ENCODE measurements at regions of chr14 and their contacts with region 1.

Region 1: GRCh38 chr14:88667555-88668273 is 104.9 kb downstream of the ZC3H14 start:
- DNase-seq: peak; percentile 25
- ATAC-seq: peak; percentile 89
- H3K4me3 ChIP-seq: peak overlapping the region; percentile 16; the same call in 1 of the 2 replicates
- H3K27ac ChIP-seq: peak overlapping the region; percentile 55
- H3K4me1 ChIP-seq: peaks cover 23% of the 10 kb centered on the region
- H3K27me3 ChIP-seq: no peaks in the 10 kb centered on the region
- CTCF ChIP-seq: peak; percentile 88 to 90 (median 88)
- EP300 ChIP-seq: no peak
- POLR2A ChIP-seq: no peak
- RAD21 ChIP-seq: peak; percentile 94

Region 2: GRCh38 chr14:88628462-88628861 is 39.3 kb before region 1 on chr14:
- CTCF ChIA-PET with region 1: interaction called, 10 read pairs
- POLR2A ChIA-PET with region 1: interaction called, 4 read pairs
- RAD21 ChIA-PET with region 1: interaction called, 4 read pairs
- SMC1A ChIA-PET with region 1: interaction called, 3 read pairs
- in situ Hi-C with region 1: no loop called
- intact Hi-C with region 1: no loop called
- DNase-seq: no peak
- ATAC-seq: no peak
- H3K4me3 ChIP-seq: no peak overlapping the region
- H3K27ac ChIP-seq: no peak overlapping the region
- H3K4me1 ChIP-seq: no peaks in the 10 kb centered on the region
- H3K27me3 ChIP-seq: no peaks in the 10 kb centered on the region
- CTCF ChIP-seq: no peak
- EP300 ChIP-seq: no peak
- POLR2A ChIP-seq: no peak
- RAD21 ChIP-seq: no peak

Region 3: DNA sequence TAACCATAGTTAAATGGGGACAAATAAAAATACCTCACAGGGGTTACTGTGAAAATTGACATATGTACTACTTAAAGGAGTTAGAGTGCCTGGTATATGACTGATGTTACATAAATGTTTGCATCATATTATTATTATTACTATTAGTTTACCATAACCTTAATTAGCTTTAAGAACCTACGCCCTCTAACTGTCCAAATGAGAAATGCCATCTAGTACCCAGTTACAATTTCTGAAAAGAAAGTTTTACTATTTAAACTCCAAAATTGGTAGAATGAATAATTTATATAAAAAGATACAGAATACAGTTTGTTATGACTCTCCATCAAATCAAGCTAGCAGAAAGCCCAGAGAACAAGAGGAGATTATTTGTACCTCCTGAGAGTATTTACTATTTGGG is 82.7 kb after region 1 on chr14:
- CTCF ChIA-PET with region 1: interaction called, 32 read pairs
- POLR2A ChIA-PET with region 1: no interaction called
- RAD21 ChIA-PET with region 1: interaction called, 21 read pairs
- SMC1A ChIA-PET with region 1: interaction called, 20 read pairs
- in situ Hi-C with region 1: no loop called
- intact Hi-C with region 1: no loop called
- DNase-seq: no peak
- ATAC-seq: no peak
- H3K4me3 ChIP-seq: no peak overlapping the region
- H3K27ac ChIP-seq: no peak overlapping the region
- H3K4me1 ChIP-seq: no peaks in the 10 kb centered on the region
- H3K27me3 ChIP-seq: no peaks in the 10 kb centered on the region
- CTCF ChIP-seq: 0 out of 6 replicates have a peak, but pooled peaks of 1 of the 3 experiments have one; percentile 4
- EP300 ChIP-seq: no peak
- POLR2A ChIP-seq: no peak
- RAD21 ChIP-seq: no peak

Region 4: GRCh38 chr14:88824314-88825077 is 156.8 kb after region 1 on chr14 and contains the start of gene TTC8:
- CTCF ChIA-PET with region 1: interaction called, 13 read pairs
- POLR2A ChIA-PET with region 1: no interaction called
- RAD21 ChIA-PET with region 1: interaction called, 8 read pairs
- SMC1A ChIA-PET with region 1: interaction called, 15 read pairs
- in situ Hi-C with region 1: no loop called
- intact Hi-C with region 1: no loop called
- DNase-seq: peak; percentile 38
- ATAC-seq: peak; percentile 99
- H3K4me3 ChIP-seq: peak within 1 kb of the TSS; percentile 75
- H3K27ac ChIP-seq: peak within 1 kb of the TSS; percentile 52
- H3K4me1 ChIP-seq: 0 out of 2 replicates have a peak, but pooled peaks cover 2% of the 10 kb centered on the region
- H3K27me3 ChIP-seq: no peaks in the 10 kb centered on the region; a peak in 1 of 4 replicates
- CTCF ChIP-seq: no peak
- EP300 ChIP-seq: no peak
- POLR2A ChIP-seq: peak; percentile 82
- RAD21 ChIP-seq: no peak
- polyA plus RNA-seq, gene TTC8: 1.9 to 3.3 TPM

Region 5: GRCh38 chr14:89027097-89027740 is 359.5 kb after region 1 on chr14:
- CTCF ChIA-PET with region 1: interaction called, 3 read pairs
- POLR2A ChIA-PET with region 1: no interaction called
- RAD21 ChIA-PET with region 1: interaction called, 7 read pairs
- SMC1A ChIA-PET with region 1: no interaction called
- in situ Hi-C with region 1: no loop called
- intact Hi-C with region 1: loop called (anchors 5 kb)
- DNase-seq: no peak
- ATAC-seq: peak; percentile 97
- H3K4me3 ChIP-seq: peak overlapping the region; percentile 70; the same call in 1 of the 2 replicates
- H3K27ac ChIP-seq: no peak overlapping the region
- H3K4me1 ChIP-seq: peaks cover 4% of the 10 kb centered on the region; the same call in 1 of the 2 replicates
- H3K27me3 ChIP-seq: peaks cover 2 to 6% of the 10 kb centered on the region in 2 experiments
- CTCF ChIP-seq: peak; percentile 63 to 71 (median 63); a peak in 5 of 6 replicates
- EP300 ChIP-seq: no peak
- POLR2A ChIP-seq: no peak
- RAD21 ChIP-seq: peak; percentile 84